ENCODE measurements at regions of chr2 and their contacts with region 1.

Region 1: GRCh38 chr2:25301453-25302352 is 40.0 kb downstream of the DNMT3A start:
- DNase-seq: peak; percentile 90
- ATAC-seq: peak; percentile 95
- H3K4me3 Mint-ChIP-seq: no peak overlapping the region
- H3K27ac Mint-ChIP-seq: peak overlapping the region; percentile 48
- H3K4me1 Mint-ChIP-seq: peaks cover 74% of the 10 kb centered on the region
- H3K27me3 Mint-ChIP-seq: no peaks in the 10 kb centered on the region

Region 2: GRCh38 chr2:25276569-25277465 is 24.9 kb before region 1 on chr2:
- CTCF ChIA-PET with region 1: interaction called, 5 read pairs
- POLR2A ChIA-PET with region 1: interaction called, 3 read pairs
- intact Hi-C with region 1: loop called in 1 of 2 experiments (anchors 1 kb)
- DNase-seq: peak; percentile 90
- ATAC-seq: peak; percentile 65
- H3K4me3 Mint-ChIP-seq: peak overlapping the region; percentile 9
- H3K27ac Mint-ChIP-seq: peak overlapping the region; percentile 90
- H3K4me1 Mint-ChIP-seq: peaks cover 70% of the 10 kb centered on the region
- H3K27me3 Mint-ChIP-seq: no peaks in the 10 kb centered on the region

Region 3: DNA sequence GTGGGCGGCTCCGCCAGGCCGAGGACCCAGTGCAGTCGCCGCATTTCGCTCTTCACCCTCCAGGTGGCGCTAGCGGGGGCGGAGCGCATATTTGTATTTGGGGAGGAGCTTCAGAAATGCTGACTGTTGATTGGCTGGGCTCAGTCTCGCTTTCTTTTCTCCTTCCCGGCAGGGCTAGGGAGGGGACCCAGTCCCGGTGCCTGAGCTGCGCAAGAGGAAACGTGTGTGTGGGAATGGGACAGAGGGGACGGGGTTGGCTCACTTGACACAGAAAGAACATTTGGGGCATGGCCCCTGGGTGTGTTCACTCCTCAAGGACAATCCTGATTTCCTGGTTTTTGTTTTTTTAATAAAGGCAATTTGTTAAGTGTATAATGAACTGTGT is 60.3 kb after region 1 on chr2:
- CTCF ChIA-PET with region 1: interaction called, 6 read pairs
- POLR2A ChIA-PET with region 1: no interaction called
- intact Hi-C with region 1: loop called in 1 of 2 experiments (anchors 1 kb)
- DNase-seq: peak; percentile 97
- ATAC-seq: peak; percentile 97
- H3K4me3 Mint-ChIP-seq: peak overlapping the region; percentile 79
- H3K27ac Mint-ChIP-seq: peak overlapping the region; percentile 96
- H3K4me1 Mint-ChIP-seq: peaks cover 14% of the 10 kb centered on the region
- H3K27me3 Mint-ChIP-seq: no peaks in the 10 kb centered on the region

Region 4: DNA sequence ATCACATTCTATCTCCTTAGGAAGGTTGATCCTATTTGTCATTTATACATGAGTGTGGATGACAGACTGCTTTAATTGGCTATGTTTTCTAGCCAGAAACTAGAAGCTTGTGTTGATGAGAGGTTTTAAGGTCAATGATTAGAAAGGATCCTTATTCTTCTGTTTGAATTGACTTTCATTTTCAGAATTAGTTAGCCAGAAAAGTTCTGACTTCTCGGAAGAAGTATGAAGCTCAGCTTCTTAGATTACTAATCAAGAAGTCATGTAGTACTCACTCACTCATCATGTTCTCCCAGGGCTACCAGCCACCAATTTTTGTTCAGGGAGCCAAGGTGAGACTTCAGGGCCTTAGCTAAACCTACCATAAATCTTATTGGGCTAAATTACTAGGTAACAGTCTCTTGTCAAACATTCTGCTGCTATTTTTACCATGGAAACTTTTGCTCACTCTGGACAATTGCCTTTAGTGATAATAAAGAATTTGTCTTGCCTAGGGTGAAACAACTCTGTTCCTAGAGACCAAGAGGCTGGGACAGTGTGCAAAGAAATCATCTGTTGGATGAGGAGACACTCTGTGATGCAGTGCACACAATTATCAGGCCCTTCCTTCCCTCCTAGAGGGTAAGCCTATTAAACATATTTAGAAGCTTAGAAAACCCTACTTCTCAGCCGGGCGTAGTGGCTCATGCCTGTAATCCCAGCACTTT is 151.6 kb after region 1 on chr2:
- CTCF ChIA-PET with region 1: no interaction called
- POLR2A ChIA-PET with region 1: no interaction called
- intact Hi-C with region 1: loop called in 1 of 2 experiments (anchors 1 kb)
- DNase-seq: peak; percentile 69
- ATAC-seq: peak; percentile 97
- H3K4me3 Mint-ChIP-seq: peak overlapping the region; percentile 19
- H3K27ac Mint-ChIP-seq: peak overlapping the region; percentile 91
- H3K4me1 Mint-ChIP-seq: peaks cover 30% of the 10 kb centered on the region
- H3K27me3 Mint-ChIP-seq: no peaks in the 10 kb centered on the region

Measured in activated CD4-positive, alpha-beta T cell treated with anti-CD3 and anti-CD28 coated beads for 36 hours (primary cell).